Mucosa of descending colon (tissue), 3 donors: ENCODE measurements at regions of chr10 and their contacts with region 1.

Region 1: DNA sequence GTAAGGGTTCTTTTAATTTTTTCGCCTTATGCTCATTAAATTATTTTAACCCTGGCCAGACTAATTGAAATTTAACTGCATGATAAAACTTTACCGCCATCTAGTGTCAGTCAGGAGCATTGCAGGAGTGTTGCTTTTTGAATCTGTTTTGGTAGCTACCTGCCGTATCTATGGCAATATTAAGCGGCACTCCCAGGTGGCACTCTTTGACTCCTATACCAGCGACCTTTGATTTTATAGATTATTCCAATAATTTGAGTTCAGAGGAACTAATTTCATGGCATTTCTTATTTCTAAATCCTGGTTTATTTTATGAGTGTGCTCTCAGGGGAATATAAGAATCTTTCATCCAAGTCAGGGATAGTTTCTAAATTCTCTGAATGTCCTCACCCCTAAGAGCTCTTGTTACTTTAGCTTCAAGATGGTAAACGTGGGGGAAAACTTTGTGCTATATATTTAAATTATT is 198.9 kb downstream of the REEP3 start:
- DNase-seq: peak in 1 of 3 donors; percentile 79
- ATAC-seq: peak; percentile 91
- H3K4me3 ChIP-seq: no peak overlapping the region
- H3K4me1 ChIP-seq: peaks cover 7% of the 10 kb centered on the region
- CTCF ChIP-seq: peak; percentile 94

Region 2: GRCh38 chr10:63166742-63167258 is 553.3 kb before region 1 on chr10:
- intact Hi-C with region 1: loop called (anchors 5 to 10 kb)
- DNase-seq: no peak
- ATAC-seq: peak; percentile 86
- H3K4me3 ChIP-seq: no peak overlapping the region
- H3K4me1 ChIP-seq: no peaks in the 10 kb centered on the region
- CTCF ChIP-seq: peak; percentile 42

Region 3: GRCh38 chr10:63217120-63217605 is 502.9 kb before region 1 on chr10:
- intact Hi-C with region 1: loop called in 1 of 2 experiments (anchors 10 kb)
- DNase-seq: peak in 1 of 3 donors; percentile 46
- ATAC-seq: peak; percentile 90
- H3K4me3 ChIP-seq: no peak overlapping the region
- H3K4me1 ChIP-seq: peaks cover 20% of the 10 kb centered on the region
- CTCF ChIP-seq: peak; percentile 39

Region 4: DNA sequence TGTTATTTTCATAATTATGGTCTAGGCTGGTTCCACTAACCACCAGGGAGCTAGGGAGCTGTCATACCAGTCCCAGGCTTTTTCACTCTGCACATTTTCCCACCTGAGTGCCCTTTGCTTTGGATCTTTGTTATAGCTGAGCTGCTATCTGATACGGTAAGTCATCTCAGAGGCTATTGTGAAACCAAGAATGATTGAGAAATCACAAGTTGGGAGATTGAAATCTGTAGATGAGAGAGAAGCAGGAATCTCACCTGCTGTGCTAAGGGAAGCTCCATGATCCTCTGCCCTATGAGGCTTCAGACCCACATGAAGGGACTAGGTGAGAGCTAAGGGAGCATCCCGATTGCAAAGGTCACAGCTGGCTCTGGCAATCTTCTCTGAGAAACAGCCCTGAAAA is 108.9 kb after region 1 on chr10:
- intact Hi-C with region 1: no loop called
- DNase-seq: no peak
- ATAC-seq: no peak
- H3K4me3 ChIP-seq: no peak overlapping the region
- H3K4me1 ChIP-seq: no peaks in the 10 kb centered on the region
- CTCF ChIP-seq: no peak